GM13976 (cell line): ENCODE measurements at regions of chr1 and their contacts with region 1.

Region 1: GRCh38 chr1:91511386-91511785 is 10.7 kb downstream of the CDC7 start:
- DNase-seq: no peak
- CTCF ChIP-seq: peak; percentile 43

Region 2: GRCh38 chr1:91054780-91055481 is 456.5 kb before region 1 on chr1:
- in situ Hi-C with region 1: no loop called
- DNase-seq: peak; percentile 37
- CTCF ChIP-seq: no peak

Region 3: GRCh38 chr1:91244737-91245136 is 266.6 kb before region 1 on chr1:
- in situ Hi-C with region 1: no loop called
- DNase-seq: no peak
- CTCF ChIP-seq: no peak

Region 4: GRCh38 chr1:91617285-91617765 is 105.9 kb after region 1 on chr1:
- in situ Hi-C with region 1: no loop called
- DNase-seq: no peak
- CTCF ChIP-seq: peak; percentile 41

Region 5: GRCh38 chr1:91684481-91685196 is 173.3 kb after region 1 on chr1:
- in situ Hi-C with region 1: no loop called
- DNase-seq: peak; percentile 29
- CTCF ChIP-seq: no peak

Region 6: DNA sequence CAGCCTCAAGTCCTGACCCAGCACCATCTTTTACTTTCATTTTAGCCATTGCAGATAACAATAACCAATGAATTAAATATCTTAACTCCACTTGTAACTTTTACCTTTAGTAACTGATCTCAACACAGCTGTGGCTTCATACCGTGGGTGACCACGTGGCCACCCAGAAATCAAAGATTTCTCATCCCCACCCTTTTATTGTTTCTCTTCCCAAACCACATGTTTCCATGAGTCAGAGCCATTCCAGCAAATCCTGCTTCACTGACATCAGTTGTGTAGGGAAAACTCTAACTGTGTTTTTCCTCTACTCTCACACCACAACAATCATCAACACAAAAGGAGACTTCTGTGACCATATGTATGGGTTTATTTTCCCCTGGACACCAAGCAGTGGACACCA is 412.8 kb after region 1 on chr1:
- in situ Hi-C with region 1: loop called (anchors 10 kb)
- DNase-seq: no peak
- CTCF ChIP-seq: no peak